Heart left ventricle (tissue), 16 donors: ENCODE measurements at regions of chr11 and their contacts with region 1.

Region 1: DNA sequence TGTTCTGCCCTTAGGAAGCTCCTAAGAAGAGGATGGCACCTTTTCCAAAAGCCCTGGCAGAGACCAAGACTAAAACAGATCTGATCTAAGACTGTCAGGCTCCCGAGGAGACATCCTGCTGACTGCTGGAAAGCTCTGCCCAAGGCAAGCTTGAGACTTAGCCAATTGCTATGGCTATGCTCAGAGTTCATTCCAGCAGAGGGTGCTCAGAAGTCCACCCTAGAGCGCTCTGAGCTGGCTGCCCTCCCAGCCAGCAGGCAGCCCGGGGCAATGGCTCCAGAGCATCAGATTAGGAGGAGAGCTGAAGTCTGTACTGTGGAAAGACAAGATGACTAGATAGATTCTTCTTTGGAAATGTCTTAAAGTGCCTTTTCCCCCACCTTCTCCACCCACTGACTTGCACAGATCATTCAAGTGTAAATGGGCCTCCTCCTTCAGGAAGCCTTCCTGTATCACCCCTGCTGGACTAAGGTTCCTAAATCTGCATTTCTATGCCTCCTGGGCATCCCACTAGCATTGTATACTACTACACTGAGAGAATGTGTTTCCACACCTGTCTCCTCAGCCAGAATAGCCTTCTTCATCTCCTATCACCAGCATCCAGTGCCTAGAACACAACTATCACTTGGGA is 23.4 kb downstream of the LRRC55 start:
- DNase-seq: peak in 1 of 5 donors; percentile 25
- ATAC-seq: peak in 3 of 4 donors; percentile 28 to 42 (median 41)
- H3K4me3 ChIP-seq: no peak overlapping the region
- H3K27ac ChIP-seq: peak overlapping the region in 9 of 12 donors; percentile 3 to 73 (median 31)
- H3K4me1 ChIP-seq: peaks cover 12 to 73% (median 44%) of the 10 kb centered on the region in 12 donors
- H3K27me3 ChIP-seq: no peaks in the 10 kb centered on the region
- CTCF ChIP-seq: peak in 6 of 12 donors; percentile 12 to 37 (median 20)
- POLR2A ChIP-seq: no peak

Region 2: GRCh38 chr11:56207796-56208195 is 997.4 kb before region 1 on chr11:
- intact Hi-C with region 1: no loop called
- DNase-seq: no peak
- ATAC-seq: no peak
- H3K4me3 ChIP-seq: no peak overlapping the region
- H3K27ac ChIP-seq: no peak overlapping the region
- H3K4me1 ChIP-seq: no peaks in the 10 kb centered on the region
- H3K27me3 ChIP-seq: no peaks in the 10 kb centered on the region
- CTCF ChIP-seq: no peak
- POLR2A ChIP-seq: no peak

Region 3: DNA sequence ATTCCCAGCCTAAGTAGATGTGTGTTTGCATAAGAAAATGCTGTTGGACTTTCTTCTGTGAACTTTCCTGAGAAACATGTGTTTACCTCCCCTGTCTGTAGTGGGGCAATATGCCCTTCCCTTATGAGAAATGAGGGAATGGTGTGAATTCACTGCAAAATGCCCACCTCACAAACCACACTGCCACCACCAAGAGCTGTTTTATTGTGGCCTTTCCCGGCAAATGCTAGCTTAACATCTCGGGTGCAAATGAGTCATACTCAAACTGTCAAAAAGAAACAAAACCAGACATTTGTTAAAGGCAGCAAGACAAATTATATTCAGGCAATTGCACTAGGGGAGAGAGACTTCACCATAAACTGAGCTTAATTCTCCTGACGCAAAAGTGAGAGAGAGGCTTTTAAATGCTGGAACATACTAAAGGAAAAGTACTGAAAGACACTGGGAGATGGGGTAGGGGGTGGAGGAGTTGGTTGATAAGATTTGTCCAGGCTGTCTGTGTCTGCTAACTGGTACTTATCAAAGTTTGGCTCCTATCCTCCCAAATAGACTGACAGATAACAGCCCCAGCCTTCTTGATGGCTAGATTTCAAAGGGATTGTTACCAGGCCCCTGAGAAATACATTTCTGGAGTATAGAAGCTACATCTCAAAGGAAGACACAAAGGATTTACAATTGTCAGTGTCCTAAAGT is 287.3 kb before region 1 on chr11:
- intact Hi-C with region 1: no loop called
- DNase-seq: no peak
- ATAC-seq: no peak
- H3K4me3 ChIP-seq: no peak overlapping the region
- H3K27ac ChIP-seq: peak overlapping the region in 1 of 12 donors; percentile 17
- H3K4me1 ChIP-seq: no peaks in the 10 kb centered on the region
- H3K27me3 ChIP-seq: no peaks in the 10 kb centered on the region
- CTCF ChIP-seq: no peak
- POLR2A ChIP-seq: no peak

Region 4: GRCh38 chr11:57131080-57131790 is 73.9 kb before region 1 on chr11:
- intact Hi-C with region 1: loop called in 1 of 10 experiments (anchors 10 kb)
- DNase-seq: peak in 3 of 5 donors; percentile 29 to 35 (median 33)
- ATAC-seq: peak in 3 of 4 donors; percentile 69 to 73 (median 72)
- H3K4me3 ChIP-seq: no peak overlapping the region
- H3K27ac ChIP-seq: no peak overlapping the region
- H3K4me1 ChIP-seq: peaks cover 0 to 5% (median 0%) of the 10 kb centered on the region in 12 donors
- H3K27me3 ChIP-seq: peaks cover 0 to 3% (median 0%) of the 10 kb centered on the region in 9 donors
- CTCF ChIP-seq: peak; percentile 30 to 75 (median 64)
- POLR2A ChIP-seq: no peak

Region 5: DNA sequence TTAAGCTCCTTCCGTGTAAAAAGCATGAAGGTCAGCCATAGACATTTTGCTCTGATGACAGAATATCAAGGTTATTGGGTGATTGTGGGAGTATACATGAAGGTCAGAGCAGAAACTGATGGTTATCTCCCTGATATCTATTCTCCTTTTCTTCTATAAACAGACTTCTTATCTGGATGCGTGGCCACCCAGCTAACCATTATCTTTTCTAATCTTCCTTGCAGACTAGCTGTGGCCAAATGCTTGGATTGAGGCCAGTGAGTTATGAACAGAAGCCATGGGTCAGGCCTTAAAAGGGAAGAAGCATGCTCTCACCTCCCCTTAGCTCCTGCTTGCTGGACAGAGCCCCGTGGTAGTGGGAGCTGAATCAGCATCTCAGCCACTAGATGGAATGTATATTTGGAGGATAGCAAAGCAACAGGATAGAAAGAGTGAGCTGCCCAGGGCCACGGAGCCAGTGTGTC is 54.7 kb before region 1 on chr11:
- intact Hi-C with region 1: loop called in 1 of 10 experiments (anchors 5 kb)
- DNase-seq: no peak
- ATAC-seq: peak in 1 of 4 donors; percentile 24
- H3K4me3 ChIP-seq: no peak overlapping the region
- H3K27ac ChIP-seq: no peak overlapping the region
- H3K4me1 ChIP-seq: peaks cover 0 to 11% (median 0%) of the 10 kb centered on the region in 12 donors
- H3K27me3 ChIP-seq: no peaks in the 10 kb centered on the region
- CTCF ChIP-seq: no peak
- POLR2A ChIP-seq: no peak

Region 6: GRCh38 chr11:57237204-57237681 is 32.1 kb after region 1 on chr11 and contains the start of gene APLNR:
- intact Hi-C with region 1: loop called in 5 of 10 experiments (anchors 5 kb)
- DNase-seq: no peak
- ATAC-seq: peak in 3 of 4 donors; percentile 44 to 74 (median 55)
- H3K4me3 ChIP-seq: peak within 1 kb of the TSS; percentile 14 to 74 (median 49)
- H3K27ac ChIP-seq: peak within 1 kb of the TSS; percentile 15 to 80 (median 65)
- H3K4me1 ChIP-seq: peaks cover 0 to 47% (median 14%) of the 10 kb centered on the region in 12 donors
- H3K27me3 ChIP-seq: peaks cover 0 to 36% (median 0%) of the 10 kb centered on the region in 9 donors
- CTCF ChIP-seq: no peak
- POLR2A ChIP-seq: no peak
- total RNA-seq, gene APLNR: 5.7 to 63.3 (median 9.9) TPM

Region 7: GRCh38 chr11:57269571-57270021 is 64.4 kb after region 1 on chr11:
- intact Hi-C with region 1: loop called in 1 of 10 experiments (anchors 10 kb)
- DNase-seq: no peak
- ATAC-seq: peak in 2 of 4 donors; percentile 69 to 72
- H3K4me3 ChIP-seq: no peak overlapping the region
- H3K27ac ChIP-seq: peak overlapping the region in 5 of 12 donors; percentile 10 to 61 (median 44)
- H3K4me1 ChIP-seq: peaks cover 0 to 18% (median 6%) of the 10 kb centered on the region in 12 donors
- H3K27me3 ChIP-seq: no peaks in the 10 kb centered on the region
- CTCF ChIP-seq: no peak
- POLR2A ChIP-seq: no peak

Region 8: GRCh38 chr11:57527056-57527631 is 322.0 kb after region 1 on chr11:
- intact Hi-C with region 1: no loop called
- DNase-seq: peak; percentile 49 to 71 (median 63)
- ATAC-seq: no peak
- H3K4me3 ChIP-seq: no peak overlapping the region
- H3K27ac ChIP-seq: no peak overlapping the region
- H3K4me1 ChIP-seq: peaks cover 0 to 21% (median 11%) of the 10 kb centered on the region in 12 donors
- H3K27me3 ChIP-seq: no peaks in the 10 kb centered on the region
- CTCF ChIP-seq: peak; percentile 89 to 97 (median 93)
- POLR2A ChIP-seq: no peak

Region 9: DNA sequence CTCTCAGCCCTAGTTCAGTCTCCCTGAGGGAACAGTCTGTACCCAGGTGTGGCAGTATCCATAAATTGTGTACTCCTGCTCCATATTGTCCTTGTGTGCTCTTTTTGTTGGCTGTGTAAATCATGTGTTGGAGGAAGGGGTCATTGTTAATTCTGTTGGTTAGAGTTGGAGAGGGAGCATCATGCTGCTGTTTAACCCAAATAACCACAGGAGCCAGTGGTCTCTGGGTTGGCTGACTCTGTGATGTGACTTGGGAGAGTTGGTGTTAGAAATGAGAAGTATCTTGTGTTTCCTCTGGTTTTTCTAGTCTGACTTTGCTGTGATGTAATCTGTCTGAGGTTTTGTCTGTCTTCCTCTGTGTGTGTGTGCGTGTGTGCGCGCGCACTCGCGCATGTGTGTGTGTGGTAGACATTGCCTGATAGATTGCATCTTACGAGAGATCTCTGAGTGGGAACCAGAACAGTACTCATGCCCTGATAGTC is 586.9 kb after region 1 on chr11:
- intact Hi-C with region 1: no loop called
- DNase-seq: peak; percentile 43 to 92 (median 71)
- ATAC-seq: peak; percentile 45 to 74 (median 61)
- H3K4me3 ChIP-seq: peak overlapping the region in 7 of 12 donors; percentile 8 to 32 (median 17)
- H3K27ac ChIP-seq: peak overlapping the region; percentile 49 to 89 (median 66)
- H3K4me1 ChIP-seq: peaks cover 7 to 80% (median 68%) of the 10 kb centered on the region in 12 donors
- H3K27me3 ChIP-seq: no peaks in the 10 kb centered on the region
- CTCF ChIP-seq: no peak
- POLR2A ChIP-seq: no peak